Endothelial cell of umbilical vein (primary cell): ENCODE measurements at regions of chr7 and their contacts with region 1.

Region 1: GRCh38 chr7:158818325-158819213 is 10.7 kb downstream of the ESYT2 start:
- DNase-seq: peak; percentile 98
- H3K4me3 ChIP-seq: peak overlapping the region in 1 of 3 experiments; percentile 55
- H3K27ac ChIP-seq: peak overlapping the region; percentile 95
- H3K4me1 ChIP-seq: peaks cover 62% of the 10 kb centered on the region
- H3K27me3 ChIP-seq: no peaks in the 10 kb centered on the region
- CTCF ChIP-seq: no peak
- POLR2A ChIP-seq: peak; percentile 69

Region 2: DNA sequence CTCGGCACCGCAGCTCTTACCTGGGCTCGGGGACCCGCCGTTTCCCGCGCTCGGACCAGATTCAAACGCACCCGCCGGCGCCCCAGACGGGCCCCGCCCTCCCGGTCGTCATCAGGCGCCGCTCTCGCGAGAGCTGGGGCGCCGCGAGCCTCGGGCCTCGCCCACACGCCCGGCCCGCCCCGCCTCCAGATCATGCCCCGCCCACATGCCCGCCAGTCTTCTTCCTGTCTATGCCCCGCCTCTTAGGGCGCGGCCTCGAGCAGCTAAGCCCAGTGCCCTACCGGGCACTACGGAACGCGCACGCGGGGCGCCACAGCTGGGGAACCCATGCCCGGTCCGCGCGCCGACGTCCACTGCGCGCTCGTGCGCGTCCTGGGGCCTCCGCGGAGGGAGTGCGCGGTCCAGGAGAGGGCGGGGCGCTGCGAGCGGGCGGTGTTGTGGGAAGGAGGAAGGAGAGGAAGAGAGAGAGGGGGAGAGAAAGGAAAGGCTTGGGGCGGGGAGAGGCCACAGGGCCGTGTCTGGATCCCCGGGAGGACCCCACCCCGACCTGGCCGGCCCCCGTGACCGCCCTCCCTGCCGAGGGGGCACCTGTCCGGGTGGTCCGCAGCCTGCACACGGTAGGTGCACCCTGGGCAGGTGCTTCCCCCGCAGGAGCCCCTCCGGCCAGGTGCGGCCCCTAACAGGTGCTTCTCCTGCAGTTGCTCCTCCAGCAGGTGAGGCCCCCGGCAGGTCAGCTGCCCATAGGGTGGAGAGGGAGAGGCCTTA is 113.7 kb before region 1 on chr7 and contains the start of gene NCAPG2:
- CTCF ChIA-PET with region 1: no interaction called
- POLR2A ChIA-PET with region 1: no interaction called
- dilution Hi-C with region 1: no loop called
- intact Hi-C with region 1: loop called (anchors 1 kb)
- DNase-seq: peak; percentile 98
- H3K4me3 ChIP-seq: peak within 1 kb of the TSS; percentile 87 to 100 (median 89)
- H3K27ac ChIP-seq: peak within 1 kb of the TSS; percentile 78
- H3K4me1 ChIP-seq: peaks cover 24% of the 10 kb centered on the region
- H3K27me3 ChIP-seq: no peaks in the 10 kb centered on the region
- CTCF ChIP-seq: no peak
- POLR2A ChIP-seq: peak; percentile 45
- total RNA-seq, gene NCAPG2: 62.3 and 66.9 TPM in 2 replicates

Region 3: DNA sequence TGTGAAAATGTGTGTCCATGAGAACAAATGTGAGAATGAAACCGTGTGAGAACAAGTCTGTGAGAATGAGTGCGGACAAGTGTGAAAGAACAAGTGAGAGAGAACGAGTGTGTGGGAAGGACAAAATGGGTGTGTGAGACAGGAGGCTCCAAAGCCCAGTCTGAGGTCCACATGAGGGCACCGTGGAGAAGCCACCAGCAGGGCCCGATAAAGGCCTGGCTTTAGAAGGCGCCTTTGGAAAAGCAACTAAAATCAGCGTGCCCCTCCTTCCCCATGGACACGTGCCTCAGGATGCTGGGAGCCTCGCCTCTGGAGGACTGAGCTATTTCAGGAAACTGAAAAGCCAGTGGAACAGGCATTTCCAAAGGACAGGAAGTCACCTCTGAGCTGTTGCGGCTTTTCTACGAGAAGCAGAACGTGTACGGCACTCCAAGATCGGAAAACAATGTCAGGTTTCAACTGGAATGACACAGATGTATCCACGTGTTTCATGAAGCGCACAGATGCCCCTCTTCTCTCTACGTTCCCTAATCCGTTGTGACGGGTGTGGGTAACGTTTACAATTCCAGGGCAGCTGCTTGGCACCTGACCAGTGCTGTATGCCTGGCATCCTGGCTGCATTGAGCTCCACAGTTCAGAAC is 35.7 kb before region 1 on chr7:
- CTCF ChIA-PET with region 1: interaction called, 7 read pairs
- POLR2A ChIA-PET with region 1: no interaction called
- dilution Hi-C with region 1: no loop called
- intact Hi-C with region 1: loop called (anchors 2 kb)
- DNase-seq: peak; percentile 80
- H3K4me3 ChIP-seq: no peak overlapping the region
- H3K27ac ChIP-seq: peak overlapping the region; percentile 4
- H3K4me1 ChIP-seq: peaks cover 12% of the 10 kb centered on the region
- H3K27me3 ChIP-seq: no peaks in the 10 kb centered on the region
- CTCF ChIP-seq: peak; percentile 48 to 53
- POLR2A ChIP-seq: no peak

Region 4: GRCh38 chr7:158856883-158857668 is 38.5 kb after region 1 on chr7:
- CTCF ChIA-PET with region 1: no interaction called
- POLR2A ChIA-PET with region 1: no interaction called
- dilution Hi-C with region 1: no loop called
- intact Hi-C with region 1: loop called (anchors 1 kb)
- DNase-seq: peak; percentile 19
- H3K4me3 ChIP-seq: peak overlapping the region; percentile 38 to 77 (median 63)
- H3K27ac ChIP-seq: no peak overlapping the region
- H3K4me1 ChIP-seq: peaks cover 12% of the 10 kb centered on the region
- H3K27me3 ChIP-seq: no peaks in the 10 kb centered on the region
- CTCF ChIP-seq: no peak
- POLR2A ChIP-seq: no peak